ENCODE measurements at regions of chr11 and their contacts with region 1.

Region 1: GRCh38 chr11:88683024-88683423 is 345.5 kb upstream of the CTSC start:
- DNase-seq: no peak
- ATAC-seq: no peak
- H3K4me3 ChIP-seq: no peak overlapping the region
- H3K4me3 Mint-ChIP-seq: no peak overlapping the region
- H3K27ac ChIP-seq: no peak overlapping the region
- H3K27ac Mint-ChIP-seq: no peak overlapping the region
- H3K4me1 ChIP-seq: no peaks in the 10 kb centered on the region
- H3K4me1 Mint-ChIP-seq: peaks cover 0 to 8% (median 7%) of the 10 kb centered on the region in 7 donors
- H3K27me3 ChIP-seq: no peaks in the 10 kb centered on the region
- H3K27me3 Mint-ChIP-seq: no peaks in the 10 kb centered on the region

Region 2: GRCh38 chr11:88604260-88604659 is 78.8 kb before region 1 on chr11:
- CTCF ChIA-PET with region 1: no interaction called
- POLR2A ChIA-PET with region 1: no interaction called
- intact Hi-C with region 1: no loop called
- DNase-seq: no peak
- ATAC-seq: no peak
- H3K4me3 ChIP-seq: no peak overlapping the region
- H3K4me3 Mint-ChIP-seq: no peak overlapping the region
- H3K27ac ChIP-seq: no peak overlapping the region
- H3K27ac Mint-ChIP-seq: peak overlapping the region in 1 of 9 donors; percentile 22
- H3K4me1 ChIP-seq: no peaks in the 10 kb centered on the region
- H3K4me1 Mint-ChIP-seq: no peaks in the 10 kb centered on the region
- H3K27me3 ChIP-seq: no peaks in the 10 kb centered on the region
- H3K27me3 Mint-ChIP-seq: peaks cover 0 to 5% (median 0%) of the 10 kb centered on the region in 5 donors

Region 3: GRCh38 chr11:88666364-88666763 is 16.7 kb before region 1 on chr11:
- CTCF ChIA-PET with region 1: no interaction called
- POLR2A ChIA-PET with region 1: no interaction called
- intact Hi-C with region 1: loop called in 1 of 2 experiments (anchors 2 kb)
- DNase-seq: no peak
- ATAC-seq: no peak
- H3K4me3 ChIP-seq: no peak overlapping the region
- H3K4me3 Mint-ChIP-seq: no peak overlapping the region
- H3K27ac ChIP-seq: no peak overlapping the region
- H3K27ac Mint-ChIP-seq: no peak overlapping the region
- H3K4me1 ChIP-seq: no peaks in the 10 kb centered on the region
- H3K4me1 Mint-ChIP-seq: peaks cover 0 to 12% (median 2%) of the 10 kb centered on the region in 7 donors
- H3K27me3 ChIP-seq: no peaks in the 10 kb centered on the region
- H3K27me3 Mint-ChIP-seq: no peaks in the 10 kb centered on the region

Measured in naive thymus-derived CD4-positive, alpha-beta T cell (primary cell).